Aorta (tissue), 5 donors: ENCODE measurements at regions of chr6 and their contacts with region 1.

Region 1: GRCh38 chr6:138231381-138231897 is 13.1 kb upstream of the PBOV1 start:
- DNase-seq: no peak
- ATAC-seq: no peak
- H3K4me3 ChIP-seq: no peak overlapping the region
- H3K27ac ChIP-seq: no peak overlapping the region
- H3K4me1 ChIP-seq: no peaks in the 10 kb centered on the region
- H3K27me3 ChIP-seq: no peaks in the 10 kb centered on the region

Region 2: GRCh38 chr6:138004423-138005287 is 226.8 kb before region 1 on chr6:
- intact Hi-C with region 1: no loop called
- DNase-seq: no peak
- ATAC-seq: no peak
- H3K4me3 ChIP-seq: no peak overlapping the region
- H3K27ac ChIP-seq: no peak overlapping the region
- H3K4me1 ChIP-seq: no peaks in the 10 kb centered on the region
- H3K27me3 ChIP-seq: no peaks in the 10 kb centered on the region

Region 3: GRCh38 chr6:138219398-138219797 is 12.0 kb before region 1 on chr6:
- intact Hi-C with region 1: no loop called
- DNase-seq: no peak
- ATAC-seq: no peak
- H3K4me3 ChIP-seq: no peak overlapping the region
- H3K27ac ChIP-seq: no peak overlapping the region
- H3K4me1 ChIP-seq: no peaks in the 10 kb centered on the region
- H3K27me3 ChIP-seq: no peaks in the 10 kb centered on the region

Region 4: GRCh38 chr6:138307816-138308728 is 76.6 kb after region 1 on chr6:
- intact Hi-C with region 1: no loop called
- DNase-seq: peak in 1 of 2 donors; percentile 53
- ATAC-seq: peak; percentile 58
- H3K4me3 ChIP-seq: no peak overlapping the region
- H3K27ac ChIP-seq: no peak overlapping the region
- H3K4me1 ChIP-seq: no peaks in the 10 kb centered on the region
- H3K27me3 ChIP-seq: no peaks in the 10 kb centered on the region

Region 5: DNA sequence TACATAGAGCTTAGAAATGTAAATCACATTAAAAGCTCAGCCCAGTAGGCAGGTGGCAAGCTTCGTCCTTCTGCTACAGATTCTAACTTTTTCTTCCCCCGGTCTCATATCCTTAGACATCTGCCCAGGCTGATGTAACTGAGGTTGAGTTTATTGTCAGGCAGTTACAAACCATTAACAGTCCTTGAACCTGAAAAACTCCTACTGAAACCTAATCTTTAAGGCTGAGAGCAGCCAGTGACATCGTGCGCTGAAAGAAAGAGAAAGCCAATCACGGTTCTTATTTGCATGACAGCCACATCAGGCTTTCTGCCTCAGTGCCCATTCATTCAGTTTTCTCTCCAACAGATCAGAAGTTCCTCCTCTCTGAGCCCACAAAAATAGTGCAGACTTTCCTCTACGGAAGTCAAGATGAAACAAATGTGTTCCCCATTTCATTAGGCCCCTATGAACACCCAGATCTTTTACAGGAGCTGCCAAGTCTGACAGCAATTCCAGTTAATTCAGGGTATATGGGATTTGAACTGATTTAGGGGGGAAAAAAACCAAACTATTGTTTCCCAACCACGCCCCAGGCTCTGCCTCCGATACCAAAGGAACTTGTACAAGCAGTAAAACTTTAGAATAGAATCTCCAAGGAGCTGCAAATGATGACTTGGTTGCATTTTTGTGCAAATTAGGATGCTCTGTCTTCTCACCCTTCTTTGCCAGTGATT is 268.0 kb after region 1 on chr6 and contains the start of gene NHSL1:
- intact Hi-C with region 1: loop called in 1 of 2 experiments (anchors 5 kb)
- DNase-seq: no peak
- ATAC-seq: no peak
- H3K4me3 ChIP-seq: no peak within 1 kb of the TSS
- H3K27ac ChIP-seq: no peak within 1 kb of the TSS
- H3K4me1 ChIP-seq: no peaks in the 10 kb centered on the region
- H3K27me3 ChIP-seq: no peaks in the 10 kb centered on the region
- total RNA-seq, gene NHSL1: 10.9 to 25.2 TPM